MCF 10A (cell line): ENCODE measurements at regions of chr3 and their contacts with region 1.

Region 1: DNA sequence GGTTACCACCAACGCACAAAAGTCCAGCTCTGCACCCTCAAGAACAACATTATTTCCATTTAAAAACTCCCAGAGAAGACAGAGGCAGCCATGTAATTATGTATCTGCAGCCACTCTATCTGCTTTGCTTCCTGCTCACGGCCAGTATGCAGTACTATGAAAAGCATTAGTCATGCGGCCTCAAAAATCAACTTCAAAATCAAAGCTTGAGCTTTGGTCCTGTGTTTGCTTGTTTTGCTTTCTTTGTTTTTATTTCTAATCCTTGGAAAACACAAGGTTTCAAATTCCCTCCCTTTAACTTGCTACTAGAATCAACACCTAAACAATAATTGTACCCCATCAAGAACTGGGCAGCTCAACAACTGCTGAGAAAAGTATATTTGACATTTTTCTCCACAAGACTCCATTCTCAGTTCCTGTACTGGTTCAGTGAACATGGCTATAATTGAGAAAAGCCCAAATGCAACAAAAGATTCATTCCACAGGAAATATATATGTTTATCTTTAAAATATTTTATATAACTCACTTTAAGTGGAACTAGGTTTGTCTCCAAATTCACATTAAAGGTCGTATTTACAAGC is 37.6 kb downstream of the GBE1 start:
- DNase-seq: peak; percentile 54
- H3K4me3 Mint-ChIP-seq: peak overlapping the region; percentile 62
- H3K27ac Mint-ChIP-seq: peak overlapping the region; percentile 69
- H3K4me1 Mint-ChIP-seq: peaks cover 46% of the 10 kb centered on the region
- H3K27me3 Mint-ChIP-seq: no peaks in the 10 kb centered on the region
- CTCF ChIP-seq: no peak

Region 2: GRCh38 chr3:81760924-81761903 is 37.4 kb after region 1 on chr3 and contains the start of gene GBE1:
- CTCF ChIA-PET with region 1: interaction called, 3 read pairs
- POLR2A ChIA-PET with region 1: interaction called, 11 read pairs
- intact Hi-C with region 1: loop called (anchors 1 kb)
- DNase-seq: peak; percentile 98
- H3K4me3 Mint-ChIP-seq: peak within 1 kb of the TSS; percentile 77
- H3K27ac Mint-ChIP-seq: peak within 1 kb of the TSS; percentile 94
- H3K4me1 Mint-ChIP-seq: peaks cover 56% of the 10 kb centered on the region
- H3K27me3 Mint-ChIP-seq: no peaks in the 10 kb centered on the region
- CTCF ChIP-seq: peak; percentile 24
- total RNA-seq, gene GBE1: 41.8 and 58.1 TPM in 2 replicates

Region 3: DNA sequence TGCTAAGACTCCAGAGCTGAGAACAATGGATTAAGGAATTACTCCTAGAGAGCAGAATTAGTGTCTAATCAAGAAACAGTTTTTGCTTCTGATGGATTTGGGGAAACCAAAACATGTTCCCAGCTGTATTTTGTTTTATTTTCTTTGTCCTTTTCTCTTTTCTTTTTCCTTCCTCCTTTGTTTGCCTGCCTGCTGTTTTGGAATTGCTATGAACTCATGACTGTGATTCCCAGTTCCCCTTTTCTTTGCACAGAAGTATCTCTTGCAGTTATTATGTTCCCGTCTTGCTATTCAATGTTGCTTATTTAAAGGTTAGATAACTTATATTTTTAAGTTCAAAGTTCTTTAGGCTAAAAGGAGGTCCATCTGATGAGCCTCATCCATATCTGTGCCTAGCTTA is 114.6 kb after region 1 on chr3:
- CTCF ChIA-PET with region 1: no interaction called
- POLR2A ChIA-PET with region 1: no interaction called
- intact Hi-C with region 1: no loop called
- DNase-seq: no peak
- H3K4me3 Mint-ChIP-seq: no peak overlapping the region
- H3K27ac Mint-ChIP-seq: no peak overlapping the region
- H3K4me1 Mint-ChIP-seq: no peaks in the 10 kb centered on the region
- H3K27me3 Mint-ChIP-seq: no peaks in the 10 kb centered on the region
- CTCF ChIP-seq: no peak